ENCODE measurements at regions of chr4 and their contacts with region 1.

Region 1: GRCh38 chr4:72312032-72312650 is 256.9 kb downstream of the ADAMTS3 start:
- DNase-seq: peak; percentile 89
- ATAC-seq: peak; percentile 90
- H3K4me3 ChIP-seq: no peak overlapping the region
- H3K27ac ChIP-seq: peak overlapping the region; percentile 3; the same call in 1 of the 2 replicates
- H3K4me1 ChIP-seq: peaks cover 5% of the 10 kb centered on the region
- H3K27me3 ChIP-seq: no peaks in the 10 kb centered on the region
- CTCF ChIP-seq: no peak
- POLR2A ChIP-seq: no peak
- RAD21 ChIP-seq: no peak

Region 2: DNA sequence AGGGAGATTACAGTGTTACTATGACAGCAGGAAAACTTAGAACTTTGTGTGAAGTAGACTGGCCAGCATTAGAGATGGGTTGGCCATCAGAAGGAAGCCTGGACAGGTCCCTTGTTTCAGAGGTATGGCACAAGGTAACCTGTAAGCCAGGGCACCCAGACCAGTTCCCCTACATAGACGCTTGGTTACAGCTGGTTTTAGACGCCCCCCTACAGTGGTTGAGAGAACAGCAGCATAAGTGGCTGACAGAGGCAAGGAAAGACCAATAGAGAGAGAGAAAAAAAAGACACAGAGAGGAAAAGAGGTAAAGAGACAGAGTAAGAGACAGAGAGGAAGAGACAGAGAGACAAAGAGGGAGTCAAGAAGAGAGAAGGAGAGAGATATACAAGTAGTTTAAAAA is 672.8 kb before region 1 on chr4:
- CTCF ChIA-PET with region 1: no interaction called
- POLR2A ChIA-PET with region 1: no interaction called
- dilution Hi-C with region 1: no loop called
- in situ Hi-C with region 1: no loop called
- intact Hi-C with region 1: no loop called
- DNase-seq: no peak
- ATAC-seq: no peak
- H3K4me3 ChIP-seq: no peak overlapping the region
- H3K27ac ChIP-seq: no peak overlapping the region
- H3K4me1 ChIP-seq: no peaks in the 10 kb centered on the region
- H3K27me3 ChIP-seq: no peaks in the 10 kb centered on the region
- CTCF ChIP-seq: no peak
- POLR2A ChIP-seq: no peak
- RAD21 ChIP-seq: no peak

Region 3: DNA sequence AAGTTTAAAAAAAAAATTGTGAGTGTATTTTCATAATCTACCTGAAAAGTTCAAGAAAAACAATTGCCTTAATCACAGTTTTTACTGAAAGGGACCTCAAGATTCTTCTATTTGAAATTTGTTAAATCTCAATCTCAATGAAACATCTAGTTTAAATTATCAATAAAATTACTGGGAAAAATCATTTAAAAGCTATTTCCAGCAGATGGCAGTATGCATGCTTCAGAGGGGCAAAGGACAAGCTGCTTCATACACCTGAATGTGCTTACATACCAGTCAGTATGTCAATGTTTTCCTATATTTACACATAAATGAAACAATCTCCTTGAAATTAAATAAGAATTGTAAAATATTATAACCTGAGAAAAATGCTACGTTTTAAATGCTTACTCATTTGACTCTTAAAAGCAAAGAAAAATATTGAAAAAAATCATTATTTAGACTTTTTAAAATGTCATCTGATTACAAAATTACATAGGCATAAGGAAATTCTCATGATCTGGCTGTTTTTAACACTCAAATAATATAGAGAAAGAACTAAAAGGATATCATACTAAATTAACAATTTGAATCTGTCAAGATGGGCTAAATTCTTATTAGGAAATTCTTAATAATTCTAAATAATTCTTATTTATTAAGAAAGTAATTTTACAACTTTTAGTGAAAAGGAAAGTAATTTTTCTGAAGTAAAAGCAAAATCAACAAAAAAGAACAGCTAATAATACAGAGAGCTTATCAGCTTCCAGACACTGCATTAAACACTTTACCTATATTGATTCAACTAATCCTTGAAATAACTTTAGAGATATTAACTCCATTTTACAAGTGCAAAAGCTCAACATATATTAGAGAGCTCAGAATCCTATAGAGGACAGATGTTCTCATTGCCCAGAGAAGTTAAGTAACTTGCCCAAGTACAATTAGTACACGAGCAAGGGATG is 14.8 kb after region 1 on chr4:
- CTCF ChIA-PET with region 1: interaction called, 10 read pairs
- POLR2A ChIA-PET with region 1: no interaction called
- dilution Hi-C with region 1: no loop called
- in situ Hi-C with region 1: no loop called
- intact Hi-C with region 1: no loop called
- DNase-seq: peak; percentile 42
- ATAC-seq: peak; percentile 53; the same call in 1 of the 2 replicates
- H3K4me3 ChIP-seq: no peak overlapping the region
- H3K27ac ChIP-seq: no peak overlapping the region
- H3K4me1 ChIP-seq: no peaks in the 10 kb centered on the region
- H3K27me3 ChIP-seq: 0 out of 2 replicates have a peak, but pooled peaks cover 2% of the 10 kb centered on the region
- CTCF ChIP-seq: peak; percentile 72
- POLR2A ChIP-seq: no peak
- RAD21 ChIP-seq: peak; percentile 72

Region 4: DNA sequence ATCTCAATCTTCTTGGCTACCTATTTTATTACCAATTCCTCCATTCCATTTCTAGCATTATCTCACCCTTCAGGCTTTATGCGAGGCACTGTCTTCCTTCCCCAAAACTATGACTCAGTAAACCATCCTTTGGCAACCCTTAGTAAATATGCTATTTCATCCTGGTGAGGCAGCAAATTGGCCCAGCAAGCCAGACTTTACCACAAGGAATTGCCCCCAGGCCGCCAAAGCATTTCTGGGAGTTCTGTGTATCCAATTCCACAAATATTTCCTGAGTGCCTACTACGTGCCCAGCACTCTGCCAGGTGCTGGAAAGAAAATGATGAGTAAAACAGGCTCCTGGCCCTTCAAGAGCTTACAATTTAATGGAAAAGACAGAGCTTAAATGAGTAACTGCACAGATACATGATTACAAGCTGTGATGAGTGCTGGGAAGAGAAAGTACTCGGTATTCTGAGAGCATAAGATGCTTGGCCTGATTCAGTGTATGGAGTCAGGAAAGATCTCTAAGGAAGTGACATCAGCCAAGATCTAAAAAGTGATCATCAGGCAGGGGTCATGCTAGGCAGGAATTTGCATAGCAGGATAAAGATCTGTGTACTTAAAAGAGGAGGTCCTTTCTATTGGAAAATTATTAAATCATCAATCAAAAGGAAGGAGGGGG is 63.1 kb after region 1 on chr4:
- CTCF ChIA-PET with region 1: no interaction called
- POLR2A ChIA-PET with region 1: no interaction called
- dilution Hi-C with region 1: no loop called
- in situ Hi-C with region 1: no loop called
- intact Hi-C with region 1: loop called (anchors 5 kb)
- DNase-seq: peak; percentile 69
- ATAC-seq: peak; percentile 54
- H3K4me3 ChIP-seq: no peak overlapping the region
- H3K27ac ChIP-seq: no peak overlapping the region
- H3K4me1 ChIP-seq: peaks cover 10% of the 10 kb centered on the region
- H3K27me3 ChIP-seq: no peaks in the 10 kb centered on the region
- CTCF ChIP-seq: no peak
- POLR2A ChIP-seq: no peak
- RAD21 ChIP-seq: no peak

Region 5: DNA sequence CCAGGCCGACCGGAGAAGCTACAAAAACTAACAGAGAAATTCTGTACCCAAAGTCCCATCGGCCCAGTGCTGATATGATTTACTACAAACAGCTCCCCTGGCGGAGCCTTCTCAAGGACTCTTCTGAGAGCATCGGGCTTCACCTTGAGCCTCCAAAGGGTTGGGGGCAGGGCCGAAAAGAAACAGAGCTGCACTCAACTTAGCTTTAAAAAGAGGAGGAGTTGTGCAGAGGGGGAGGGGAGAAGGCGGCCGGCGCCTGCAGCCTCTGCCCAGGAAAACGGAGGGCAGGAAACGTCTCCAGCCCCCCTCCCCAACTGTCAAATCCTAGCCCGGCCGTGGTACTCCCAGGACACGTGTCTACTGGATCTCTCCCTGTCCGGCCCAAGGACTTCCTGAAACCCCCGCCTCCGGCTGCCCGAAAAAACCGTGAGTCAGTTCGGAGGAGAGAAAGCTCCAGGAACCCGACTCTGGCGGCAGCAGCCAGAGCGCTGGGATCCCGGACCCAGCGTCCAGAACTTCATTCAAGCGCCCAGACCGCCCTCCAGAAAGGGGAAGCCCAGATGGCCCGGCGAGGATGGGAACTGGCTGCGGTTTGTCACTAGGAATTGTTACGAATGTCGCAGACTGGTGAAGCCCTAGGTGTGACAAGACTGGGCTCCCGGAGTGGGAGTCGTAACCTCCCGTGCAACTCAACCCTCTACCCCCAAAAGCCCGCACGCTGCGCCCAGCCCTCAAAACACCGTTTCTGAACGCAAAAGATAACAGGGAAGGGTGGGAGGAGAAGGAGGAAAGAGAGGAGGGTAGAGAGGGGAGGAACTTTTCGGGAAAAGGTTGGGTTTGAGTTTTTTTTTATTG is 255.9 kb after region 1 on chr4:
- CTCF ChIA-PET with region 1: no interaction called
- POLR2A ChIA-PET with region 1: no interaction called
- dilution Hi-C with region 1: no loop called
- in situ Hi-C with region 1: no loop called
- intact Hi-C with region 1: loop called (anchors 5 kb)
- DNase-seq: peak; percentile 77
- ATAC-seq: peak; percentile 78
- H3K4me3 ChIP-seq: peak overlapping the region; percentile 62
- H3K27ac ChIP-seq: no peak overlapping the region; the same call in 1 of the 2 replicates
- H3K4me1 ChIP-seq: no peaks in the 10 kb centered on the region; the same call in 1 of the 2 replicates
- H3K27me3 ChIP-seq: no peaks in the 10 kb centered on the region
- CTCF ChIP-seq: peak; percentile 35
- POLR2A ChIP-seq: no peak
- RAD21 ChIP-seq: 0 out of 2 replicates have a peak, but pooled peaks have one; percentile 13